Activated CD8-positive, alpha-beta T cell treated with anti-CD3 and anti-CD28 coated beads for 36 hours (primary cell): ENCODE measurements at regions of chr20 and their contacts with region 1.

Region 1: GRCh38 chr20:13546497-13547131 is 92.1 kb downstream of the TASP1 start:
- DNase-seq: peak; percentile 89
- ATAC-seq: peak; percentile 56
- H3K4me3 Mint-ChIP-seq: no peak overlapping the region
- H3K27ac Mint-ChIP-seq: no peak overlapping the region
- H3K4me1 Mint-ChIP-seq: no peaks in the 10 kb centered on the region
- H3K27me3 Mint-ChIP-seq: no peaks in the 10 kb centered on the region
- CTCF ChIP-seq: peak; percentile 84

Region 2: GRCh38 chr20:12598894-12599293 is 947.7 kb before region 1 on chr20:
- CTCF ChIA-PET with region 1: no interaction called
- POLR2A ChIA-PET with region 1: no interaction called
- intact Hi-C with region 1: no loop called
- DNase-seq: no peak
- ATAC-seq: no peak
- H3K4me3 Mint-ChIP-seq: no peak overlapping the region
- H3K27ac Mint-ChIP-seq: no peak overlapping the region
- H3K4me1 Mint-ChIP-seq: no peaks in the 10 kb centered on the region
- H3K27me3 Mint-ChIP-seq: no peaks in the 10 kb centered on the region
- CTCF ChIP-seq: no peak

Region 3: GRCh38 chr20:13111249-13111911 is 435.2 kb before region 1 on chr20:
- CTCF ChIA-PET with region 1: interaction called, 53 read pairs
- POLR2A ChIA-PET with region 1: no interaction called
- intact Hi-C with region 1: no loop called
- DNase-seq: no peak
- ATAC-seq: no peak
- H3K4me3 Mint-ChIP-seq: no peak overlapping the region
- H3K27ac Mint-ChIP-seq: no peak overlapping the region
- H3K4me1 Mint-ChIP-seq: no peaks in the 10 kb centered on the region
- H3K27me3 Mint-ChIP-seq: peaks cover 2% of the 10 kb centered on the region
- CTCF ChIP-seq: no peak

Region 4: GRCh38 chr20:13325033-13325432 is 221.6 kb before region 1 on chr20:
- CTCF ChIA-PET with region 1: interaction called, 30 read pairs
- POLR2A ChIA-PET with region 1: no interaction called
- intact Hi-C with region 1: no loop called
- DNase-seq: peak; percentile 52
- ATAC-seq: peak; percentile 45
- H3K4me3 Mint-ChIP-seq: no peak overlapping the region
- H3K27ac Mint-ChIP-seq: no peak overlapping the region
- H3K4me1 Mint-ChIP-seq: peaks cover 10% of the 10 kb centered on the region
- H3K27me3 Mint-ChIP-seq: peaks cover 20% of the 10 kb centered on the region
- CTCF ChIP-seq: peak; percentile 40

Region 5: GRCh38 chr20:13468166-13468565 is 78.4 kb before region 1 on chr20:
- CTCF ChIA-PET with region 1: interaction called, 16 read pairs
- POLR2A ChIA-PET with region 1: no interaction called
- intact Hi-C with region 1: no loop called
- DNase-seq: no peak
- ATAC-seq: no peak
- H3K4me3 Mint-ChIP-seq: no peak overlapping the region
- H3K27ac Mint-ChIP-seq: no peak overlapping the region
- H3K4me1 Mint-ChIP-seq: no peaks in the 10 kb centered on the region
- H3K27me3 Mint-ChIP-seq: no peaks in the 10 kb centered on the region
- CTCF ChIP-seq: no peak

Region 6: GRCh38 chr20:13525225-13525940 is 21.2 kb before region 1 on chr20:
- CTCF ChIA-PET with region 1: interaction called, 25 read pairs
- POLR2A ChIA-PET with region 1: no interaction called
- intact Hi-C with region 1: no loop called
- DNase-seq: no peak
- ATAC-seq: no peak
- H3K4me3 Mint-ChIP-seq: no peak overlapping the region
- H3K27ac Mint-ChIP-seq: no peak overlapping the region
- H3K4me1 Mint-ChIP-seq: peaks cover 3% of the 10 kb centered on the region
- H3K27me3 Mint-ChIP-seq: no peaks in the 10 kb centered on the region
- CTCF ChIP-seq: no peak

Region 7: DNA sequence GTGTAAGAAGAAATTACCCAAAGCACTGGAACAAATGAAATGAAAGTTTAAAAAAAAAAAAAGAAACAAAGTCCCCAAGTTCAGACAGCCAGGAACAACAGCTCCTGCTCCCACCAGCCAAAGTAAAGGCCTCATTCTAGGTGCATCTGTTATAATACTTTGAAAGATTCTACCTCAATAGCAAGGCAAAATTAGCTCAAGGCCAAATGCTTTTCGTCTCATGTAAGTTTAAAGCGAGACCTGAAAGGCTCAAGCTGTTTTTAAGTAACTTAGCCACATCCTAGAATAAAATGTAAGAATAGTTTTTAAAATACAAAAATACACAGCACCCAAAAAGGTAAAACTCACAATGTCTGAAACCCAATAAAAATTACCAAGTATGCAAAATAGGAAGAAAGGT is 27.5 kb after region 1 on chr20:
- CTCF ChIA-PET with region 1: interaction called, 19 read pairs
- POLR2A ChIA-PET with region 1: no interaction called
- intact Hi-C with region 1: no loop called
- DNase-seq: no peak
- ATAC-seq: no peak
- H3K4me3 Mint-ChIP-seq: no peak overlapping the region
- H3K27ac Mint-ChIP-seq: no peak overlapping the region
- H3K4me1 Mint-ChIP-seq: no peaks in the 10 kb centered on the region
- H3K27me3 Mint-ChIP-seq: no peaks in the 10 kb centered on the region
- CTCF ChIP-seq: no peak

Region 8: GRCh38 chr20:13718171-13718570 is 171.6 kb after region 1 on chr20:
- CTCF ChIA-PET with region 1: no interaction called
- POLR2A ChIA-PET with region 1: no interaction called
- intact Hi-C with region 1: no loop called
- DNase-seq: no peak
- ATAC-seq: no peak
- H3K4me3 Mint-ChIP-seq: no peak overlapping the region
- H3K27ac Mint-ChIP-seq: no peak overlapping the region
- H3K4me1 Mint-ChIP-seq: no peaks in the 10 kb centered on the region
- H3K27me3 Mint-ChIP-seq: no peaks in the 10 kb centered on the region
- CTCF ChIP-seq: no peak

Region 9: GRCh38 chr20:14245368-14245970 is 698.9 kb after region 1 on chr20:
- CTCF ChIA-PET with region 1: no interaction called
- POLR2A ChIA-PET with region 1: no interaction called
- intact Hi-C with region 1: no loop called
- DNase-seq: no peak
- ATAC-seq: no peak
- H3K4me3 Mint-ChIP-seq: no peak overlapping the region
- H3K27ac Mint-ChIP-seq: no peak overlapping the region
- H3K4me1 Mint-ChIP-seq: no peaks in the 10 kb centered on the region
- H3K27me3 Mint-ChIP-seq: no peaks in the 10 kb centered on the region
- CTCF ChIP-seq: no peak